RWPE1 (cell line): ENCODE measurements at regions of chr15 and their contacts with region 1.

Region 1: GRCh38 chr15:69480932-69481658 is 28.5 kb downstream of the RPLP1 start:
- DNase-seq: no peak
- H3K27ac ChIP-seq: no peak overlapping the region
- CTCF ChIP-seq: no peak

Region 2: DNA sequence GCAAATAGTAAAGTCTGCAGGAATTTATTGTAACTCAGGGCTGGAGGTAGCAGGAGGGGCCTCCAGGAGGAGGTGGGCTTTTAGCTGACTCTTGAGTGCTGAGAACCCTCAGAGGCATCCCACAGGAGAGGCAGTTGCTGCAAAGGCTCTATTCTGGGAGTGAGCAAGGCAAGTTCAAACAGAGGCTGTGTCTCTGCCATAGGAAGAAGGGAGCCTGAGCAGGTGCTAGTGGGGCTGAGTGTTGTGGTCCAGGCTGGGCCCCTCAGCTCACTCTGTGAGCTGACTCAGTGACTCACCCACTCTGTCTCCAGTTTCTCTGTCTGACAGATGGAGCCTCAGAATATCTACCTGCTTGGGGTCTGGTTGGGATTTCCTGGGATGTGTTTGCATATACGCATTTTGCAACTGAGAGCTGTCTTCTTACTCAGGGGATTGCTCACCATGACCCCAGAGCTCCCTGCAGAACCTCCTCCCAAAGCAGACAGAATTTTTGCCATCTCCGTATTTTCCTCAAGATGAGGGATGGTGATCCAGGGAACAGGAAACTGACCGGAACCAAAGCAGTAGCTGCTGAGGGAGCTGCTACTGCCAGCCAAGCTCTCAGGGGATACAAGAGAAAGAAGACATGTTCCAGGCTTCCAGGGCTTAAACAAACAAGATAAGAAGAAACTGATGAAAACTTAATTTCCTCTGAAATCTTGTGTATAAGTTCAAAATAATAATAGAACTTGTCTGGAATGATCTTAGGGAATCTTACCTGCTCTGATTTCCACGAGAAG is 480.2 kb before region 1 on chr15:
- CTCF ChIA-PET with region 1: no interaction called
- POLR2A ChIA-PET with region 1: no interaction called
- DNase-seq: no peak
- H3K27ac ChIP-seq: no peak overlapping the region
- CTCF ChIP-seq: no peak

Region 3: GRCh38 chr15:69452692-69453521 is 28.2 kb before region 1 on chr15 and contains the start of gene RPLP1:
- CTCF ChIA-PET with region 1: no interaction called
- POLR2A ChIA-PET with region 1: interaction called, 14 read pairs
- DNase-seq: peak; percentile 97
- H3K27ac ChIP-seq: peak within 1 kb of the TSS; percentile 98
- CTCF ChIP-seq: no peak

Region 4: DNA sequence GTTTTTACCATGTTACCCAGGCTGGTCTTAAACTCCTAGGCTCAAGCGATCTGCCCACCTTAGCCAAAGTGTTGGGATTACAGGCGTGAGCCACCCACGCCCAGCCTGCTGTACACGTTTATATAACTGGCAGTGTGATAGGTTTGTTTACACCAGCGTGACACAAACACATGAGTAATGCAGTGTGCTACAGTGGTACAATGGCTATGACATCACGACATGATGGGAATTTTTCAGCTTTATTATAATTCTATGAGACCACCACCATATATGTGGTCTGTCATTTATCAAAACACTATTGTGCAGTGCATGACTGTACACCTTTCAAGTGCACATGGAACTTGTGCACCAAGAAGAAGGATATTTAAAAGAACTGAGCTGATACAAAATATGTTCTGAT is 1069.5 kb after region 1 on chr15:
- CTCF ChIA-PET with region 1: no interaction called
- POLR2A ChIA-PET with region 1: interaction called, 13 read pairs
- DNase-seq: no peak
- H3K27ac ChIP-seq: no peak overlapping the region
- CTCF ChIP-seq: no peak